Sigmoid colon (tissue), 7 donors: ENCODE measurements at regions of chr16 and their contacts with region 1.

Region 1: DNA sequence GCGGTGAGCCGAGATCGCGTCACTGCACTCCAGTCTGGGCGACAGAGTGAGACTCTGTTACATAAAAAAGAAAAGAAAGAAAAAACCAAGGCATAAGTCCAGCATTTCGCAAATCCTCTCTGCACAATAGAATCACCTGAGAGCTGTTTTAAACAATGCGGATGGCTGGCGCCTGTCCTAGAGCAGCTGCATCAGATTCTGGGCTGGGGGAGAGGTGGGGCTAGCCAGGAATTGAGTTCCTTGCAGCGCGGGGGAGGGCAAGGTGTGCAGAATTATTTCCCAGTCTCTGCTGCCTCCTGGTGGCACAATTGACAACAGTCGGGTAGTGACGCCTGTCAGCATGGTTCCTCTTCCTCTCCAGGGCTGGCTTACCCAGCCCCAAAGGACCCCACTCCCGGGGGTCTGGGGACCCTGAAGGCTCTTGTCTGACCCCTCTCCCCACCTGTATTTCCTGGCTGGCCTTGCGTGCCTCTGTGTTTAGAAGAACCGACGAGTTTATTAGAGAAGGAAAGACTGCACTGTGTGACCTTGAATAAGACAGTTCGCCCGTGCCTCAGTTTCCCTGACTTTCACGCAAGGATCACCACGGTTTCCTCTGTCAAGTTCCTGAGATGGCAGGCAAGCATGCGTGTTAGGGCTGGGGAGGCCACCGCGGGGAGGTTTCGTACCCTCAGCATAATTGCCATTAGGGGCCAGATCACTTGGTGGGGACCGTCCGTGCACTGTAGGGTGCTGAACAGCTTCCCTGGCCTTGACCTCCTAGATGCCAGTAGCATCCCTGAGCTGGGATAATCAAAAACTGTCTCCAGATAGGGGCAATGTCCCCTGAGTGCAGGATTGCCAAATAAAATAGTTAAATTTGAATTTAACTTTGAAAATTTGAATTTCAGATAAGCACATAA is 41.0 kb upstream of the PLCG2 start:
- DNase-seq: peak; percentile 89
- H3K4me3 ChIP-seq: peak overlapping the region in 2 of 4 donors; percentile 22 to 32
- H3K27ac ChIP-seq: peak overlapping the region in 2 of 4 donors; percentile 40 to 47
- H3K4me1 ChIP-seq: peaks cover 0 to 11% (median 10%) of the 10 kb centered on the region in 4 donors
- H3K27me3 ChIP-seq: no peaks in the 10 kb centered on the region
- CTCF ChIP-seq: peak; percentile 78 to 85 (median 82)
- EP300 ChIP-seq: no peak
- POLR2A ChIP-seq: no peak

Region 2: DNA sequence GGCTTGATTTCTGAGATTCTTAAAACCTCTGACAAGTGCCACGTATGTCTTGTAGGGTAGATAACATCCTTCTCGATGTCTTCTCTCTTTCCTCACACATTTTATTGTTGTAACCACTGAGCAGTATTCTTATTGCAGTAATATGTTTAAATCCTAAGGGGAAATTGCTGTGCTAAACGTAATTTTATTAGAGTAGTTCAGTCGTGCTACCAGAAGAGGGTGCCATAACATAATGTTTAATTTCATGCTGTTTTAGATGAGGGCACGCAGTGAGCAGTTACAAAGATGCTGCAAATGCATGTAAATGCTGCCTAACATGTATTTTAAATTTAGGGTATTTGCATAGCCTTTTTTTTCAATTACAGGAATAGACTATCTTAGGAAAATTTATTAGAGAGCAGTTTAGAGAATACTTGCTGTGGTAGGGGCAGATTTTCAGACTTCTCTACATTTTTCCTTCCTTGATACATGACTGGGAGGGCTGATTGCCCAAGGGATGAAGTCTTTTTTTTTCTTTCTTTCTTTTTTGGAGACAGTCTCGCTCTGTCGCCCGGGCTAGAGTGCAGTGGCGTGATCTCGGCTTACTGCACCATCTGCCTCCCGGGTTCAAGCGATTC is 371.7 kb before region 1 on chr16:
- intact Hi-C with region 1: loop called (anchors 5 kb)
- DNase-seq: no peak
- H3K4me3 ChIP-seq: no peak overlapping the region
- H3K27ac ChIP-seq: no peak overlapping the region
- H3K4me1 ChIP-seq: peaks cover 0 to 14% (median 8%) of the 10 kb centered on the region in 4 donors
- H3K27me3 ChIP-seq: no peaks in the 10 kb centered on the region
- CTCF ChIP-seq: peak; percentile 46 to 72 (median 62)
- EP300 ChIP-seq: no peak
- POLR2A ChIP-seq: no peak

Region 3: DNA sequence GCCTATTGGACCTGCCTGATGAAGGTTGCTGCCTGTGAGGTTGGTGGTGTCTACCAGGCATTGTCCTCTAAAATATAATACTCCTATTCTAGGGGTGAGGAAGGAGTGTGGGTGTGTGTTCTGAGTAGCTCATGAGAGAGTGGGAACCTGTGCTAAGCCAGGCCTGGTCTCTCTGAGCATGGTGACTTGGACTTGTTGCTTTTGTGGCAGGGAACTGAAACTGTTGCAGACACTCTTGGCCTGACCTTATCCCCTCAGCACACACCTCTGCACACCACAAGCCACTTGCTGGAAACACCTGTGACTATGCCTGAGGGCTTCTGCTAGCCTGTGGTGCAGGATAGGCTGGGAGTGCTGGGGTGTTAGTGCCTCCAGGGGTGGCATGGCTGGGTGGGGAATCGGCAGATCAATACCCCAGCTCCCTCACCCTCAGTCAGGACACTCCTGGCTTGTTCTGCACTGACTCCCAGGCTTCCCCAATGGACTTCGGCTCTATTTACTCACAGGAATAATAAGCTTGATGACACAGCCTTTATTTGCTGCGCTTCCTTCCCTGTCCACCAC is 70.9 kb after region 1 on chr16:
- intact Hi-C with region 1: no loop called
- DNase-seq: no peak
- H3K4me3 ChIP-seq: no peak overlapping the region
- H3K27ac ChIP-seq: no peak overlapping the region
- H3K4me1 ChIP-seq: no peaks in the 10 kb centered on the region
- H3K27me3 ChIP-seq: no peaks in the 10 kb centered on the region
- CTCF ChIP-seq: no peak
- EP300 ChIP-seq: no peak
- POLR2A ChIP-seq: no peak

Region 4: DNA sequence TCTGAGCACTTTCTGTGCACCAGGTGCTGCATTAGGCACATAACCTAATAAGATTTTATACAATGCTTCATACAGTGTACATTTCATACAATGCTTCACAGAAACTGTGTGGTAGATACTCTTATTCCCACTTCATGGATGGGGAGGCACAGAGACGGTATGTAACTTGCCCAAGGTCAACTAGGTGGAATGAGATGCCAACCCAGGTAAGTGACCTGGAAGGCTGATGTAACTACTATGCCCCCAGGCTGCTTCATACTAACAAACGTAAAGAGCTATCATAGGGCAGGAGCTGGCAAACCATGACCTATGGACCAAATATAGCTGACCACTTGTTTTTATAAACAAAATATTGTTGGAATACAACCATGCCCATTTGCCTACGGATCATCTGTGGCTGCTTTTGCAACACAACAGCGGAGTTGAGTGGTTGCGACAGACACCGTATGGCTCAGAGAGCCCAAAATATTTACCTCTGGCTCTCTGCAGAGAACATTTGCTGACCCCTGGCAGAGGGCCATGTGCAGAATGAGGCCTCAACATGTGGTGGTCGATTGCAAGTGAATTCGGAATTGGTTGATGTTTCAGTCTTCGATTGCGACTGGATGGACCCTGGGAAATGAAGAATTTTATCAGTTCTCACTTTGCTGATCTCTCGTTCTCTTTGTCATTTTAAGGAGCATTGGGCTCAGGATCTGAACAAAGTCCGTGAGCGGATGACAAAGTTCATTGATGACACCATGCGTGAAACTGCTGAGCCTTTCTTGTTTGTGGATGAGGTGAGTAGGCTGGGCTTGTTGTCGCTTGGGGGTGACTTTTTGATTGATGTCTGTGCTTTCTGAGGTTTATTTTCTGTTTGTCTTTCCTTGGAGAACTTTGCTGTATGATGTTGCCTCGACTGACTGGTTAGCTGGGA is 150.6 kb after region 1 on chr16:
- intact Hi-C with region 1: no loop called
- DNase-seq: no peak
- H3K4me3 ChIP-seq: no peak overlapping the region
- H3K27ac ChIP-seq: no peak overlapping the region
- H3K4me1 ChIP-seq: no peaks in the 10 kb centered on the region
- H3K27me3 ChIP-seq: no peaks in the 10 kb centered on the region
- CTCF ChIP-seq: no peak
- EP300 ChIP-seq: no peak
- POLR2A ChIP-seq: no peak